PC-9 (cell line): ENCODE measurements at regions of chr6 and their contacts with region 1.

Region 1: GRCh38 chr6:39309942-39310531 is 4.2 kb downstream of the KCNK17 start:
- DNase-seq: peak; percentile 54 to 79
- H3K4me3 ChIP-seq: no peak overlapping the region
- H3K27ac ChIP-seq: no peak overlapping the region
- H3K4me1 ChIP-seq: no peaks in the 10 kb centered on the region
- H3K27me3 ChIP-seq: peaks cover 24% of the 10 kb centered on the region
- CTCF ChIP-seq: peak; percentile 97

Region 2: DNA sequence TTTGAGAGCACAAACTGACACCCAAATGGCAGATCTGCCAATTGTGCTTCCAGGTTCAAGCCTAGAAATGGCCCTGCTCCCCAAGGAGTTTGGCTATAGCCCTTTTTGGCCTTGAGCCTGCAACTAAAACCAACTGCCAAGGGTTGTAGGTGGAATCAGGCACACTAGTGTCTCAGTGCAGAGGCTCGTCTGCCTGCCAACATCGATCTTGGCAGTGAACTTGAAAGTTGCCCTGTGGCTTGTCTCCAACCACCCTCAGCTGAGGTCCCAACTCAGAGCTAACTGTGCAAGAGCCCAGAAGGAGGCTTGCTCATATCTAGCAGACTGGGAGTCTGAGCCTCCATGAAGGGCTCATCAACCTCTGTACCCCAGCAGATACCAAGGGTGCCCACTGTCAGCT is 354.2 kb before region 1 on chr6:
- CTCF ChIA-PET with region 1: no interaction called
- POLR2A ChIA-PET with region 1: no interaction called
- intact Hi-C with region 1: no loop called
- DNase-seq: no peak
- H3K4me3 ChIP-seq: no peak overlapping the region
- H3K27ac ChIP-seq: no peak overlapping the region
- H3K4me1 ChIP-seq: no peaks in the 10 kb centered on the region
- H3K27me3 ChIP-seq: peaks cover 36% of the 10 kb centered on the region
- CTCF ChIP-seq: no peak

Region 3: DNA sequence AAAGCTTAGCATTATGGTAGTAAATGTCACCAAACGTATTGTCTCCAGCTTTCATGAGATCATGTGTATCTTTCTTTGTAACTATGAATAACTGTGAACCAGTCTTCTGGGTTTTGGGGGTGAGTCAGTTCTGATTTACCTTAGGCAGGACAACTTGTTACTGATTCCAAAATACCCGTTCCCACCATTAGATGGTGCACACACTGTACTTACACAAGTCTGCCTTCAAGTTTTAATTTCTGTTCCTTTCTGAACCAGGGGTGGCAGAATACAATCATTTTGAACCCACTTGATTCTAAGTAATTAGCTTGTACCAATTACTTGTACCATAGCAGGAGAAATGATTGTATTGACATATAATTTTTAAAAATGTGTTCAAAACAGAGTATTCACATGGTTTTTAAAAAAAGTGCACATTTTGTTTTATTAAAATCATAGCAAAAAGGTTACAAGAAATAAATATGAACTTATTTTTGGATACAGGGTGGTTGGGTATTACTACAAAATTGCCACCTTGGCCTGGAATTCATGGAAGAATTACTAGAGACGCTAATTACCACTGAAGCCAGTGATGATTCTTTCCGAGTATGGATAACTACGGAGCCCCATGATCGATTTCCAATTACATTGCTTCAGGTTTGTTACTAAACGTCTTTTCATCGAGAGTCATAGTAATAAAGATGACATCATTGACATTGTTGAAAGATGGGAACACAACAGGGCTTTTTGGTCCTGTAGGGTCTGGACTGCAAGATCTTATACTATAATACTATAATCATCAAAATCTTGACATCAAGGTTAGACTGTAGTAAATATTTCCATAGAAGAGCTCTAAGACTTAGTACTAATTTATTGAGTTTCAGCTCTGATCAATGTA is 336.6 kb before region 1 on chr6:
- CTCF ChIA-PET with region 1: no interaction called
- POLR2A ChIA-PET with region 1: no interaction called
- intact Hi-C with region 1: loop called (anchors 2 kb)
- DNase-seq: peak; percentile 15 to 67
- H3K4me3 ChIP-seq: no peak overlapping the region
- H3K27ac ChIP-seq: no peak overlapping the region
- H3K4me1 ChIP-seq: no peaks in the 10 kb centered on the region
- H3K27me3 ChIP-seq: peaks cover 40% of the 10 kb centered on the region
- CTCF ChIP-seq: peak; percentile 79

Region 4: DNA sequence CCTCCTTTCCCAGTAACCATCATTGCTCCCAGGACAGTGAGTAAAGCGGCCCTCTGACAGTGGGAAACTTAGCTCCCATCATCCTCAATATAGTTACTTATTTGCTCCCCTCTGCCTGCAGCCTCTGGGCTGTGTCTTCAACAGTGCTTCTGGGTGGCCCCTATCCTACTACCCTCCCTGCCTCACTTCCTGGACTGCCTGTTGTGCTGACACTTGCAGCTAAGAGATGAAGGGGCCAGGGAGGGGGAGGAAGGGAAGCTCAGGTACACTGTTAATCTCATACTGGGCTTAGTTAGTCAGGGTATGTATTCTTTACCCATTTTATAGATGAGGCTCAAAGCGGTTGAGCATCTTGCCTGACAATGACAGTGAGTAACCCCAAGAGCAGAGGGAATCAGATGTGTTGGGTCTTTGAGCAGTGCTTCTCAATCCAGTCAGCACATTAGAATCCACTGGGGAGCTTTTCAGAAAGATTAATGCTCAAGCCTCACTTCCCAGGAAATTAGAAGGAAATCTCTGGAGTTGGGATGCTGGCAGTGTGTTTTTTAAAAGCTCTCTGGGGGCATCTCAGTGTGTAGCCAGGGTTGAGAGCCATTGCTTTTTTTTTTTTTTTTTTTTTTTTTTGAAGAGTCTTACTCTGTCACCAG is 53.6 kb before region 1 on chr6:
- CTCF ChIA-PET with region 1: interaction called, 12 read pairs
- POLR2A ChIA-PET with region 1: no interaction called
- intact Hi-C with region 1: no loop called
- DNase-seq: no peak
- H3K4me3 ChIP-seq: no peak overlapping the region
- H3K27ac ChIP-seq: no peak overlapping the region
- H3K4me1 ChIP-seq: no peaks in the 10 kb centered on the region
- H3K27me3 ChIP-seq: no peaks in the 10 kb centered on the region
- CTCF ChIP-seq: no peak